ENCODE measurements at regions of chr1 and their contacts with region 1.

Region 1: DNA sequence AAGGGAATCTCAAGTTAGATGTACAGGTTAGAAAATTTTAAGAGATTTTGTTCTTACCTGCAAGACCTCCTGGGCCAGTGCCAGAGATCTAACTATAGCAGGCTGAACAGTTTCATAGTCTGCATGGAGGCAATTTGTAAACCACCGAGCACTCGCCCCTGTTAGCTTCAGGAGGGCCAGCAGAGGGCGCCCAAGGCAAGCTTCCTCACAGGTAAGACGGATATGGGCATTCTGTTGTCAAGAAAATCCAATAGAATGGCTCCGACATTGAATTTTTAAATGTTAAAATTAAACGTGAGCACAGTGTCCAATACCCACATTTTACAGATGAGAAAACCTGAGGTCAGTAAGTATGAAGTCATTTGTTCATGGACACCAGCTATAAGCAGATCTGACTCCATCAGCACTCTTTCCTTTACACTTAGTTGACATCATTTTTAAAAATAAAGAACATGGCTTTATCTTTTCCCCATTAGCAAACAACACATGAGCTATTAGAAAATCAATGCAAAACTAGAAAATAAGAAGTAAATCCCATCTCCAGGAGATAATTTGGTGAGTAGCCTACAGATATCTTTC is 2.2 kb downstream of the REG4 start:
- DNase-seq: peak; percentile 37 to 96 (median 74)

Region 2: GRCh38 chr1:119743781-119744597 is 65.1 kb before region 1 on chr1:
- intact Hi-C with region 1: loop called (anchors 5 kb)
- DNase-seq: peak; percentile 45 to 95 (median 73)

Measured in posterior cingulate gyrus (tissue), 11 donors.